Astrocyte of the cerebellum (primary cell): ENCODE measurements at regions of chr4 and their contacts with region 1.

Region 1: DNA sequence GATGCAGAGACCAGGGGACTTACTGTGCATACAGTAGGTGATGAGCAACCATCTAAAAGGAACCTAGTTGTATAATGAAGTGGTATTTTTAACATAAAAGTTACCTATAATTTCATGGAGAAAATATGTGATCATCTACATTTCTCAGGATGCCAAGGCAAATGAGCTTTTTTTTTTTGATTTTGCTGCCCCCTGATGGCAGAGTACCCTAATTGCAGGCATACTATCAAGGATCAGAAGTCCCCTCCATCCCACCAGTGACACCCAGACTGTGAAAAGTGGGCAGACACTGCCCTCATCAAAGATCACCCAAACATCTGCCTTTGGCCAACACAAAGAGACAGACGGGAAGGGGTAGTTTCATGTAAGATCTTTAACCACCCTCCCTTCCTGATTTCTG is 9.6 kb upstream of the ABLIM2 start:
- DNase-seq: no peak
- H3K4me3 ChIP-seq: no peak overlapping the region
- CTCF ChIP-seq: peak; percentile 42

Region 2: GRCh38 chr4:8221476-8221875 is 53.2 kb after region 1 on chr4:
- in situ Hi-C with region 1: loop called (anchors 5 kb)
- DNase-seq: no peak
- H3K4me3 ChIP-seq: no peak overlapping the region
- CTCF ChIP-seq: no peak